IMR-90 (cell line): ENCODE measurements at regions of chr2 and their contacts with region 1.

Region 1: GRCh38 chr2:100252811-100253698 is 69.2 kb downstream of the LONRF2 start:
- DNase-seq: no peak
- ATAC-seq: no peak
- H3K4me3 ChIP-seq: no peak overlapping the region
- H3K27ac ChIP-seq: no peak overlapping the region
- H3K4me1 ChIP-seq: peaks cover 2% of the 10 kb centered on the region; the same call in 1 of the 2 replicates
- H3K27me3 ChIP-seq: 0 out of 2 replicates have a peak, but pooled peaks cover 2% of the 10 kb centered on the region
- CTCF ChIP-seq: no peak
- POLR2A ChIP-seq: no peak
- RAD21 ChIP-seq: no peak

Region 2: DNA sequence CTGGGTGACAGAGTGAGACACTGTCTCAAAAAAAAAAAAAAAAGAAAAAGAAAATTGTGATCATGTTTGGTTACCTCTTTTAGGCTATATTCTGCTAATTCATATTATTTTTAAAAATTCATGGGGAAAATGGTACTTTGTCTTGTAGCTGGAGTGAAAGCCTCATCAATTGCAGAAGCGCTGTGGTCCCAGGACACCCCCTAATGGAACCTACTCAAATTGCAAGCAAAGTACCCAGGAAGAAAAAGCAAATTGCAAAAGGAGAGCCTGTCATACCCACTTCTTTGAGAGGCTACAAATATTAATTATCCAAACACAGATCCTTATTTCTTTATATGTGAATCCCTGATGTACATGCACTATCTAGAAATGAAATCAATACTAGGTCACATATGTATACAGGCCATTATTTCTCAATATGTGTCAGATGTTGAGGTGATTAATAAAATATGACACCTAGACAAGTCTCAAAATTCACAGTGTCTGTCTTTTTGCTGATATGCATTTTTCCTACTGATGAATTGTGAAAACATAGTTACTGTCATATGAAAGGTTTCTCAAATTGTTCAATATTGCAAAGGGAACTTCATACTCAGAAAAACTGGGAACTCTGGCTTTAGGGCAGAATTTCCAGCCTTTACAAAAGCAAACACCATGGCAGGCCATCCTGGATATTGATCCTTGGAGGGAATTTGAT is 1329.7 kb before region 1 on chr2:
- CTCF ChIA-PET with region 1: no interaction called
- POLR2A ChIA-PET with region 1: no interaction called
- dilution Hi-C with region 1: no loop called
- in situ Hi-C with region 1: no loop called
- intact Hi-C with region 1: no loop called
- DNase-seq: no peak
- ATAC-seq: no peak
- H3K4me3 ChIP-seq: no peak overlapping the region
- H3K27ac ChIP-seq: no peak overlapping the region
- H3K4me1 ChIP-seq: no peaks in the 10 kb centered on the region
- H3K27me3 ChIP-seq: peaks cover 4% of the 10 kb centered on the region; the same call in 1 of the 2 replicates
- CTCF ChIP-seq: 0 out of 2 replicates have a peak, but pooled peaks have one; percentile 7
- POLR2A ChIP-seq: no peak
- RAD21 ChIP-seq: no peak

Region 3: DNA sequence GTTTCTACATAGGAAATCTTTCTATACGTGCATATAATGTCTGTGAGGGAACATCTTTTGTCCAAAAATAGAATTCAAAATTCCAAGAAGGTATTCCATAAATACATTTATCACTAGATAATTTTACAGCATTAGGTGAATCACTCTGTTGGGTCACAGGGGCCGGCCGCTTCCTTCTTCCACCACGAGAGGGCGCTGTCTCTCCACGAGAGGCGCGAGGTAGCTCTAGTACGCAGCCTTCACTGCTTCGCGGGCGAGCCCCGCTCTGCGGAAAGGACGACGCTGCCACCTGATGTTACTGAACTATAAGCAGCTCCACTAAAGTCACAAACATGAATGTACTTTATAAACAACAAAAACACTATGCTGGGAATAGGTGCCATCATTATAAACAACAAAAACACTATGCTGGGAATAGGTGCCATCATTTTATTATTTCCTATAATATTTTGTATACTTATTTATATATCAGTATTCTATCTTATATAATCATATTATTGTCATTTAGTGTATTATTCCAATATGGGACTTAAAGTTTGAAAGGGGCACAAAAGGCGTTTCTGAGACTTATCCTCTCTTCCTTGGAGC is 693.9 kb before region 1 on chr2:
- CTCF ChIA-PET with region 1: interaction called, 7 read pairs
- POLR2A ChIA-PET with region 1: no interaction called
- dilution Hi-C with region 1: no loop called
- in situ Hi-C with region 1: loop called (anchors 5 kb)
- intact Hi-C with region 1: no loop called
- DNase-seq: peak; percentile 67
- ATAC-seq: peak; percentile 99
- H3K4me3 ChIP-seq: no peak overlapping the region
- H3K27ac ChIP-seq: no peak overlapping the region
- H3K4me1 ChIP-seq: no peaks in the 10 kb centered on the region
- H3K27me3 ChIP-seq: no peaks in the 10 kb centered on the region
- CTCF ChIP-seq: peak; percentile 97
- POLR2A ChIP-seq: no peak
- RAD21 ChIP-seq: peak; percentile 99